ENCODE measurements at regions of chr1 and their contacts with region 1.

Region 1: DNA sequence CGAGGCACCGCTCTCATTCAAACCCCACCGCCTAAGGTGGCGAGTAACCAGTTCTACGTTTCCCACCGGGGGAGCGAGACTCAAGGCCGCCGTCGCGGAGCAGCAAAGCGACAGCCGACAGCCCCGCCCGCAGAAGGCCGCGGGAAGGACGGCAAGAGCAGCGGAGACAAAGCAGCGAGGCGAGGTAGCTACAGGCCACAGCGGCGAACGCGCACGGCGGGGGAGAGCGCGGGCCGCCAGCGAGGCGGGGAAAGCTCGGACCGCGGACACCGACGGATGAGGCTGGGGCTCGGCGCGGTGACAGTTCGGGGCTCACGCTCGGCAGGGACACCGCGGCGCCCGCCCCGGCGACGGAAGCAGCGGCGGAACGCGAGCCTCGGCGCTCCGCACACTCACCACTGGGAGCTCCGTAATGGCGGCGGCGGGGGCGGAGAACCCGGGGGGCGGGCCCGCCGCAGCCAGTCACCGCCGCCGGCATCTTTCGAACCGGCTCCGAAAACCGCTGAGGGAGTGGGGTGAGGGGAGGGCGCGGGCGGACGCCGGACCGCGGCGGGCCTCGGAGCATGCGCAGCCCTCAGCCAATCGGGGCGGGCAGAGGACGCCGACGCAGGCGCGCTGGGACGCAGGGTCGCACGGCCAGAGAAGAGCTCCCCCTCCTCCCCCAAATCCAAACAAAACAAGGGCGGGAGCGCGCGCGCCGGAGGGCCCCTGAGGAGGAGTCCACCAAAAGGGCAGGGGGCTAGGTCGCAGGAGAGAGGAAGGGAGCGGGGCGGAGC is 666 bp downstream of the HP1BP3 start:
- DNase-seq: peak; percentile 98
- ATAC-seq: peak; percentile 88
- H3K4me3 Mint-ChIP-seq: peak overlapping the region; percentile 96
- H3K27ac Mint-ChIP-seq: peak overlapping the region; percentile 96
- H3K4me1 Mint-ChIP-seq: peaks cover 29% of the 10 kb centered on the region
- H3K27me3 Mint-ChIP-seq: no peaks in the 10 kb centered on the region

Region 2: GRCh38 chr1:19596714-19597495 is 1189.5 kb before region 1 on chr1:
- CTCF ChIA-PET with region 1: no interaction called
- POLR2A ChIA-PET with region 1: no interaction called
- intact Hi-C with region 1: loop called in 1 of 2 experiments (anchors 5 kb)
- DNase-seq: peak; percentile 98
- ATAC-seq: peak; percentile 86
- H3K4me3 Mint-ChIP-seq: peak overlapping the region; percentile 100
- H3K27ac Mint-ChIP-seq: peak overlapping the region; percentile 99
- H3K4me1 Mint-ChIP-seq: peaks cover 44% of the 10 kb centered on the region
- H3K27me3 Mint-ChIP-seq: no peaks in the 10 kb centered on the region

Region 3: DNA sequence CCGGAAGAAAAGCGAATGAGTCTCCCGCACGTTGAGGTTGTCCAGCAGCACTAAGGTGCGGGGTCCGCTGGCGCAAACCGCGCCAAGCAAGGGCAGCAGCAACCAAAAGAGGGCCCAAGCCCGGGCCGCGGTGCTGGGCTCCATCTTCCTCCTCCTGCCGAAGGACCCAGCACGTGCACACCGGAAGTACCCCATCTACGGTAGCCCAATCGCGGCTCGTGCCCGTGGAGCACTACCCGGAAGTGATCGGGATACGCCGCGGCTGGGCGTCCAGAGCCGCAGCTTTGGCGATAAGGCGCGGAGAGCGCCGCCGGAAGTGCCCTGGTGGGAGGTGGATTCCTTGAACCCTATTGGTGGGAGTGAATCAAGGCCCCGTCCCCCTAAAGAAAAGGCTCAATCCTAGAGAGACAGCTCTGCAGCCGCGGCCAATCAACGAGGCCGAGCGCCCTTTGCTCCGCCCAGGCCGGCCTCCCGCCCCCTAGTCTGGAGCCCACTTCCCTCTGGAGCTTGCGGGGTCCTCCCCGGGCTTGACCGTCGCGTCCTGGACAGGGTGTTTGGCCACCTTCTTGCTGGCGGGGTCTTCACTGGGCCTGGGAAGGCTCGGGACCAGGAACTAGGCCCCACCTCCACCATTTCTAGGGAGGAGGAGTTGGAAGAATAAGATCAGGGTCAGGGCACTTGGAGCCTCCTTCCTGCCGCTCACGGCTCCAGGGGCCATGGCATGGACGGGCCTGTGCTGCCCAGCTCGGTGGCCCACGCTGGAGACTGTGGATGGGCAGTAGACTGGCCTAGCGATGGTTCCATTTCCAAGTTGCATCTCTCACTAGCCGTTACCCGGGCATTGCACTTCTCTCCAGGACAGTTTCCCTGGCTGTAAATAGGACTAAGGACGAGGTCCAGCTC is 125.0 kb before region 1 on chr1 and contains the start of gene DDOST:
- CTCF ChIA-PET with region 1: no interaction called
- POLR2A ChIA-PET with region 1: interaction called, 4 read pairs
- intact Hi-C with region 1: loop called in 1 of 2 experiments (anchors 1 kb)
- DNase-seq: peak; percentile 97
- ATAC-seq: peak; percentile 97
- H3K4me3 Mint-ChIP-seq: peak within 1 kb of the TSS; percentile 91
- H3K27ac Mint-ChIP-seq: peak within 1 kb of the TSS; percentile 100
- H3K4me1 Mint-ChIP-seq: peaks cover 35% of the 10 kb centered on the region
- H3K27me3 Mint-ChIP-seq: no peaks in the 10 kb centered on the region
- total RNA-seq, gene DDOST: 112 to 136 TPM

Region 4: GRCh38 chr1:20732588-20733360 is 53.7 kb before region 1 on chr1 and contains the start of gene SH2D5:
- CTCF ChIA-PET with region 1: interaction called, 5 read pairs
- POLR2A ChIA-PET with region 1: no interaction called
- intact Hi-C with region 1: loop called in 1 of 2 experiments (anchors 1 kb)
- DNase-seq: peak; percentile 87
- ATAC-seq: peak; percentile 88
- H3K4me3 Mint-ChIP-seq: peak within 1 kb of the TSS; percentile 74
- H3K27ac Mint-ChIP-seq: peak within 1 kb of the TSS; percentile 69
- H3K4me1 Mint-ChIP-seq: peaks cover 17% of the 10 kb centered on the region
- H3K27me3 Mint-ChIP-seq: peaks cover 21% of the 10 kb centered on the region
- total RNA-seq, gene SH2D5: 0.32 to 0.51 TPM

Region 5: DNA sequence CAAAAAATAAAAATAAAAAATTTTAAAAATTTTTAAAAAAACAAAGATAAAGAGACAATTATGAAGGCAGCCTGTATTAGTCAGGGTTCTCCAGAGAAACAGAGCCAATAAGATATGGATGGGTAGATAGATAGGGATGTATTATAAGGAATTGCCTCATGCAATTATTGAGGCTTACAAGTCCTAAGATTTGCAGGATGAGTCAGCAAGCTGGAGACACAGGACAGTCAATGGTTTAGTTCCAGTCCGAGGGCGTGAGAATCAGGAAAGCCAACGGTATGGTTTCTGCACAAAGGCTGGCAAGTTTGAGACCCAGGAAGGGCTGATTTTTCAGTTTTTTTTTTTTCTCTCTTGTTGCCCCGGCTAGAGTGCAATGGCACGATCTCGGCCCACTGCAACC is 414.3 kb after region 1 on chr1:
- CTCF ChIA-PET with region 1: interaction called, 4 read pairs
- POLR2A ChIA-PET with region 1: no interaction called
- intact Hi-C with region 1: loop called (anchors 5 kb)
- DNase-seq: no peak
- ATAC-seq: no peak
- H3K4me3 Mint-ChIP-seq: no peak overlapping the region
- H3K27ac Mint-ChIP-seq: no peak overlapping the region
- H3K4me1 Mint-ChIP-seq: no peaks in the 10 kb centered on the region
- H3K27me3 Mint-ChIP-seq: peaks cover 8% of the 10 kb centered on the region

Region 6: DNA sequence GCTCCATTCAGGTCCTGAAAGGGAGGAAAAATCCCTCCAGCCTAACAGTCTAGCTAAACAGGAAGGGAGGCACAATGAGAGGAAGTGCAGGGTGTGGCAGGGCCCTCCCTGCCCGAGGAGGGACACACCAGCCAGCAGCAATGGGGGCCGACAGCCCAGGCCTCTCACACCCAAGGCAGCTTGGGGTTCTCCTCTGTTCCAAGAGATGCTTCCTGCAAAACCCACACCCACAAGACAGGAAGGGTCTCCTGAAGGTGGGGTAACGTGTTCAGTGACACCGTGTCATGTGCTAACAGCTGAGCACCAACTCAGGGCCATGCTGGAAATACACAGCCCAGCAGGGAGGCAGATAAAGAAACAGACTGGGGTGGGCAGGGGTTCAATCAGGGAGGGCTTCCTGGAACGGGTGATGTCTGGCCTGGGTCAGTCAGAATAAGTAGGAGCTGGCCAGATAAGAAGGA is 493.6 kb after region 1 on chr1:
- CTCF ChIA-PET with region 1: no interaction called
- POLR2A ChIA-PET with region 1: no interaction called
- intact Hi-C with region 1: no loop called
- DNase-seq: no peak
- ATAC-seq: peak; percentile 19
- H3K4me3 Mint-ChIP-seq: peak overlapping the region; percentile 33
- H3K27ac Mint-ChIP-seq: peak overlapping the region; percentile 90
- H3K4me1 Mint-ChIP-seq: peaks cover 53% of the 10 kb centered on the region
- H3K27me3 Mint-ChIP-seq: no peaks in the 10 kb centered on the region

Region 7: DNA sequence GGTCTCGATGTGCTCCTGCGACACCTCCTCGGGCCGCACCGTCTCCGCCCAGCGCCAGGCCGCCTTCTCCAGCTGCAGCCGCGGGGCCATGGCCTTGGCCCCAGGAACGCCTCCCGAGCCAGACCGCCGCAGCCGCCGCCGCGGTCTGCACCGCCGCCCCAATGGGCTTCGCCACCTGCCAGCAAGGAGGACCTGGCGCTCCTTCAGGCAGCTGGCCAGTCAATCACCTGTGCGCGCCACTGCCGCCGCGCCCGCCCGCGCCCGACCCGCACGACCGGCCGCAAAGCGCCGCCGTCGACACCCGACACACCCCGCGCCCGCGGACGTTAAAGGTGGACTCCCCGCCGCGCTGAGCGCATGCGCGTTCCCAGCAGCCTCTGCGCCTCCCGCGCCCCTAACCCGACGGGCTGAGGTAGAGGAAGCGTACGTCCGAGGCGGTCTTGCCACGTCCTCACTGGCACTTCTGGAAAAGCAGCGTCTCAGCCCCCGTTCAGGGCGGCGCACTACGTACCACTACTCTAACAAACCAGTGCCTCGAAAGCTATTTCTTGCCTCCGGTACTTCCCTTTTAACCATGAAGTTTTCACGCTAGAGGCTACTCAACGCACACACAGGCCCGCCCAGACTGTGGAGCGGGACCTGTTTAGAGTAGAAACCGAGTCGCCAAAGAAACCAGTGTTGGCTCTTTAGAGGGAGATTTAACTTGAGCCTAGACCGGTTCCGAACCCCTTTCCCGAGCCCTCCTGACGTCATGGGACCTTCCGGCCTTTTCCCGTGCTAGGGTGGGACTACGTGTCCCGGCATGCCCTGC is 996.6 kb after region 1 on chr1 and contains the start of gene USP48:
- CTCF ChIA-PET with region 1: no interaction called
- POLR2A ChIA-PET with region 1: no interaction called
- intact Hi-C with region 1: loop called in 1 of 2 experiments (anchors 2 kb)
- DNase-seq: peak; percentile 98
- ATAC-seq: peak; percentile 79
- H3K4me3 Mint-ChIP-seq: peak within 1 kb of the TSS; percentile 87
- H3K27ac Mint-ChIP-seq: peak within 1 kb of the TSS; percentile 100
- H3K4me1 Mint-ChIP-seq: peaks cover 21% of the 10 kb centered on the region
- H3K27me3 Mint-ChIP-seq: no peaks in the 10 kb centered on the region
- total RNA-seq, gene USP48: 66.9 to 81.5 TPM

Measured in activated CD4-positive, alpha-beta T cell treated with anti-CD3 and anti-CD28 coated beads for 36 hours (primary cell).